Endothelial cell of umbilical vein (primary cell): ENCODE measurements at regions of chr1 and their contacts with region 1.

Region 1: GRCh38 chr1:90721210-90722194 is 4.4 kb upstream of the BARHL2 start:
- DNase-seq: peak; percentile 75
- H3K4me3 ChIP-seq: no peak overlapping the region
- H3K27ac ChIP-seq: no peak overlapping the region
- H3K4me1 ChIP-seq: peaks cover 2% of the 10 kb centered on the region
- H3K27me3 ChIP-seq: peaks cover 85 to 97% of the 10 kb centered on the region in 2 experiments
- CTCF ChIP-seq: peak; percentile 87 to 96
- POLR2A ChIP-seq: no peak

Region 2: GRCh38 chr1:90650401-90650800 is 71.1 kb before region 1 on chr1:
- CTCF ChIA-PET with region 1: no interaction called
- POLR2A ChIA-PET with region 1: no interaction called
- dilution Hi-C with region 1: no loop called
- intact Hi-C with region 1: no loop called
- DNase-seq: no peak
- H3K4me3 ChIP-seq: no peak overlapping the region
- H3K27ac ChIP-seq: no peak overlapping the region
- H3K4me1 ChIP-seq: no peaks in the 10 kb centered on the region
- H3K27me3 ChIP-seq: no peaks in the 10 kb centered on the region
- CTCF ChIP-seq: no peak
- POLR2A ChIP-seq: no peak

Region 3: DNA sequence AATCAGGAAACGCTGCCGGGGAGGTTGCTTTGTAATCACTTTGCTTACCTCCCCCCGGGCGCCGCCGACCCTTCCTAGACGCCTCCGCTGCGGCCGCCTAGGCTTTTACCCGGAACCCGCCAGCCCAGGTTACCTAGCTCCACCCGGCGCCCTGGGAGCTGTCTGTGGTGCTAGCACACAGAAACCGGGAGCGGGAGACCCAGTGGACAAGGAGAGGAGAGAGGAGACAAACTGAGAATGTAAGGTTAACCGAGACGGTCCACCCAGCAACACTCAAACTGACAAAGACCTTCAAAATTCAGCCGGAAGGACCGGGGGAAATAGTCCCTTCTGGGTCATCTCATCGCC is 14.2 kb before region 1 on chr1:
- CTCF ChIA-PET with region 1: interaction called, 16 read pairs
- POLR2A ChIA-PET with region 1: no interaction called
- dilution Hi-C with region 1: no loop called
- intact Hi-C with region 1: no loop called
- DNase-seq: no peak
- H3K4me3 ChIP-seq: no peak overlapping the region
- H3K27ac ChIP-seq: no peak overlapping the region
- H3K4me1 ChIP-seq: peaks cover 2% of the 10 kb centered on the region
- H3K27me3 ChIP-seq: peaks cover 66 to 80% of the 10 kb centered on the region in 2 experiments
- CTCF ChIP-seq: no peak
- POLR2A ChIP-seq: no peak

Region 4: GRCh38 chr1:91021686-91022517 is 300.4 kb after region 1 on chr1 and contains the start of gene ZNF644:
- CTCF ChIA-PET with region 1: interaction called, 61 read pairs
- POLR2A ChIA-PET with region 1: interaction called, 3 read pairs
- dilution Hi-C with region 1: no loop called
- intact Hi-C with region 1: loop called (anchors 2 kb)
- DNase-seq: peak; percentile 84
- H3K4me3 ChIP-seq: peak within 1 kb of the TSS; percentile 72 to 99 (median 96)
- H3K27ac ChIP-seq: peak within 1 kb of the TSS; percentile 97
- H3K4me1 ChIP-seq: peaks cover 19% of the 10 kb centered on the region
- H3K27me3 ChIP-seq: no peaks in the 10 kb centered on the region
- CTCF ChIP-seq: no peak
- POLR2A ChIP-seq: peak; percentile 53
- total RNA-seq, gene ZNF644: 38.7 and 47.0 TPM in 2 replicates